Activated T-helper 1 cell treated with anti-CD3 and anti-CD28 coated beads, Interleukin-12 subunit alpha, Interleukin-12 subunit beta, Interleukin-2, Interleukin-4 antibody, amounts not matched to agents 30 ng/mL and 10 ng/mL and 1 ng/mL, durations not matched to agents 14 hours and 24 hours and 36 hours (primary cell): ENCODE measurements at regions of chr21 and their contacts with region 1.

Region 1: GRCh38 chr21:43866260-43866629 is 1.2 kb downstream of the AGPAT3 start:
- DNase-seq: no peak
- H3K4me3 Mint-ChIP-seq: peak overlapping the region; percentile 92
- H3K27ac Mint-ChIP-seq: peak overlapping the region; percentile 92
- H3K4me1 Mint-ChIP-seq: peaks cover 44% of the 10 kb centered on the region
- H3K27me3 Mint-ChIP-seq: peaks cover 2% of the 10 kb centered on the region

Region 2: DNA sequence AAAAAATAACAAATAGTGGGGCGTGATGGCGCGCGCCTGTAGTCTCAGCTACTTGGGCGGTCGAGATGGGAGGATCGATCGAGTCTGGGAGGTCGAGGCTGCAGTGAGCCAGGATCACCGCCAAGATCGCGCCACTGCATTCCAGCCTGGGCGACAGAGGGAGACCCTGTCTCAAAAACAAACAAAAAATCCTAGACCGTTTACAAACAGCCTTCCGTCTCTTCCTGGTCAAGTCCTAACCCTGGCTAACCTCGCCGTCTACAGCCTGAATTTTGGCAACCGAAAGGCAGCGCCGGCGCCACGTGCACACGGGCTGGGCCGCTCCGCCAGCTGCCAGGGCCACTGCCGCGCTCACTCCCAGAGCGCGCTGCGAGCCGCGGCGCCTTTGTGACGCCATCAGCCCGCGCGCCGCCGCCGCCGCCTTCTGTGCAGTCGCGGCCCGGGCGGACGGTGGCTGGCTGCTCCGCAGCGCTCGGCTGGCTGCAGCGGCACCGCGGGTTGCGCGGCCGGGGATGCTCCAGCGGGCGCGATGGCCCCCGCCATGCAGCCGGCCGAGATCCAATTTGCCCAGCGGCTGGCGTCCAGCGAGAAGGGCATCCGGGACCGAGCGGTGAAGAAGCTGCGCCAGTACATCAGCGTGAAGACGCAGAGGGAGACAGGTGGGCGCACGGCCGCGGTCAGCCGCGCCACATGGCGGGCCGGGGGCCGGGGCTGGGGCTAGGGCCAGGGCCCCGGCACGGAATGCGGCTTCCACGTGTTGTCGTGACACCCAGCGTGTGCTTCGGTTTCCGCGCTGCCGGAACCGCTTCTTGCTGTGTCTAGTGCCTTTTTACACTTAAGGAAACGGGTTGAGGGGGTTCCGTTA is 206.9 kb before region 1 on chr21 and contains the starts of genes HSF2BP and RRP1B:
- intact Hi-C with region 1: loop called (anchors 5 kb)
- DNase-seq: peak; percentile 79
- H3K4me3 Mint-ChIP-seq: peak within 1 kb of the TSS; percentile 95
- H3K27ac Mint-ChIP-seq: peak within 1 kb of the TSS; percentile 92
- H3K4me1 Mint-ChIP-seq: peaks cover 28% of the 10 kb centered on the region
- H3K27me3 Mint-ChIP-seq: peaks cover 2% of the 10 kb centered on the region
- total RNA-seq, gene HSF2BP: 1.2 TPM in 2 replicates
- total RNA-seq, gene RRP1B: 76.8 and 77.8 TPM in 2 replicates

Region 3: GRCh38 chr21:43810505-43811261 is 55.6 kb before region 1 on chr21:
- intact Hi-C with region 1: loop called (anchors 1 kb)
- DNase-seq: peak; percentile 84
- H3K4me3 Mint-ChIP-seq: no peak overlapping the region
- H3K27ac Mint-ChIP-seq: peak overlapping the region; percentile 48
- H3K4me1 Mint-ChIP-seq: no peaks in the 10 kb centered on the region
- H3K27me3 Mint-ChIP-seq: peaks cover 1% of the 10 kb centered on the region

Region 4: GRCh38 chr21:43880111-43880985 is 14.1 kb after region 1 on chr21:
- intact Hi-C with region 1: loop called (anchors 2 kb)
- DNase-seq: no peak
- H3K4me3 Mint-ChIP-seq: no peak overlapping the region
- H3K27ac Mint-ChIP-seq: no peak overlapping the region
- H3K4me1 Mint-ChIP-seq: peaks cover 49% of the 10 kb centered on the region
- H3K27me3 Mint-ChIP-seq: no peaks in the 10 kb centered on the region

Region 5: GRCh38 chr21:43916691-43917514 is 50.7 kb after region 1 on chr21:
- intact Hi-C with region 1: loop called (anchors 1 kb)
- DNase-seq: peak; percentile 53
- H3K4me3 Mint-ChIP-seq: peak overlapping the region; percentile 81
- H3K27ac Mint-ChIP-seq: peak overlapping the region; percentile 81
- H3K4me1 Mint-ChIP-seq: peaks cover 66% of the 10 kb centered on the region
- H3K27me3 Mint-ChIP-seq: no peaks in the 10 kb centered on the region

Region 6: GRCh38 chr21:44011980-44012527 is 145.8 kb after region 1 on chr21 and contains the start of gene TRAPPC10:
- intact Hi-C with region 1: loop called (anchors 5 kb)
- DNase-seq: peak; percentile 85
- H3K4me3 Mint-ChIP-seq: peak within 1 kb of the TSS; percentile 91
- H3K27ac Mint-ChIP-seq: peak within 1 kb of the TSS; percentile 94
- H3K4me1 Mint-ChIP-seq: peaks cover 47% of the 10 kb centered on the region
- H3K27me3 Mint-ChIP-seq: no peaks in the 10 kb centered on the region
- total RNA-seq, gene TRAPPC10: 85.5 and 95.3 TPM in 2 replicates